Heart left ventricle (tissue), 16 donors: ENCODE measurements at regions of chr3 and their contacts with region 1.

Region 1: GRCh38 chr3:50245831-50246516 is 10.0 kb downstream of the GNAI2 start:
- DNase-seq: peak; percentile 91 to 95 (median 93)
- ATAC-seq: peak; percentile 62 to 77 (median 74)
- H3K4me3 ChIP-seq: peak overlapping the region; percentile 6 to 58 (median 49)
- H3K27ac ChIP-seq: peak overlapping the region; percentile 85 to 99 (median 94)
- H3K4me1 ChIP-seq: peaks cover 34 to 100% (median 96%) of the 10 kb centered on the region in 12 donors
- H3K27me3 ChIP-seq: no peaks in the 10 kb centered on the region
- CTCF ChIP-seq: peak; percentile 95 to 99 (median 98)
- POLR2A ChIP-seq: no peak

Region 2: GRCh38 chr3:50227390-50228183 is 18.4 kb before region 1 on chr3:
- intact Hi-C with region 1: loop called in 5 of 10 experiments (anchors 1 to 2 kb)
- DNase-seq: peak; percentile 91 to 97 (median 93)
- ATAC-seq: peak; percentile 87 to 94 (median 92)
- H3K4me3 ChIP-seq: peak overlapping the region; percentile 49 to 91 (median 69)
- H3K27ac ChIP-seq: peak overlapping the region in 11 of 12 donors; percentile 65 to 87 (median 76)
- H3K4me1 ChIP-seq: peaks cover 4 to 54% (median 17%) of the 10 kb centered on the region in 12 donors
- H3K27me3 ChIP-seq: no peaks in the 10 kb centered on the region
- CTCF ChIP-seq: peak; percentile 72 to 98 (median 94)
- POLR2A ChIP-seq: peak in 1 of 2 donors; percentile 45

Region 3: DNA sequence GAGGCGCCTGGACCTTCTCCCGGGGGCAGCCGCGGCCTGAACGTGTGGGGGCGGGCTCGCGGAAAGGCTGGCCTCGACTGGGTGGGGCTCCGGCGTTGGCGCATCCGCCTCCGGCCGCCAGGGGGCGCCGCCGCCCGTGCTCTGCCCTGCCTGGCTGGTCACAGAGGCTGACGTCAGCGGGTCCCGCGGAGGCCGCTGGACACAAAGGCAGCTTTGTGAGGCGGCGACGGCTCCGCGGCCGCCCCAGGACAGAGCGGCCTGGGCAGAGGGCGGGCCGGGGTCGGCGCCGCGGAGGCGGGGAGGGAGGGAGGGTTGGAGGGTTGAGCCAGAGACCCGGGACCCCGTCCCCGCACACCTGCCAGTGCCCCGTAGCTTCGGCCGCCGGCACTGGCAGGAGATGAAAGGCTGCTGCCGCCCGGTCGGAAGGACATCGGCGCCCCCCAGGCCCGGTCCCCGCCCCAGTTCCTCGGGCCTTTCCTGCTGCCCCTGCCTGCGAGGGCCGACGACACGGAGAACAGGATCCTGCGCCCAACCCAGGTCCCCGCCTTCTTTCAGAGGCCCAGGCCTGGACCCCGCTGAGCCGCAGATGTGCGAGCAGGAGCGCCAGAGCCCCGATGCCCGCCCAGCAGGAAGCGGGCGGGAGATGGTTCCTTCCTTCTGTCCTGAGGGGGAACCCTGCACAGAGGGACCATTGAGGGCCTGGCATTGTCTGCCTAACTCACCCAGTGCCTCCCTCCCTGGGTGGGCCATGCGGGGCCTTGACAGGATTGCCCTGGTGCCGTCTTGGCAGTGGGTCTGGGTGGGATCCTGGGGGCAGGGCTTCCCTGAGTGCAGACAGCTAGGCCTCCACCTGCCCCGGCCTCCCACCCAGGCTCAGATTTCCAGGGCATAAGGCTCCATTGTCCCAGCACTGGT is 14.3 kb after region 1 on chr3:
- intact Hi-C with region 1: loop called in 1 of 10 experiments (anchors 2 kb)
- DNase-seq: peak; percentile 95 to 97 (median 96)
- ATAC-seq: peak; percentile 56 to 89 (median 80)
- H3K4me3 ChIP-seq: peak overlapping the region; percentile 50 to 79 (median 72)
- H3K27ac ChIP-seq: peak overlapping the region; percentile 88 to 100 (median 100)
- H3K4me1 ChIP-seq: peaks cover 0 to 65% (median 47%) of the 10 kb centered on the region in 12 donors
- H3K27me3 ChIP-seq: no peaks in the 10 kb centered on the region
- CTCF ChIP-seq: peak; percentile 95 to 99 (median 98)
- POLR2A ChIP-seq: peak in 1 of 2 donors; percentile 71